Activated CD4-positive, alpha-beta T cell treated with anti-CD3 and anti-CD28 coated beads, Interleukin-2, amount 10 ng/mL, durations not matched to agents 24 days and 14 days (primary cell): ENCODE measurements at regions of chr13 and their contacts with region 1.

Region 1: DNA sequence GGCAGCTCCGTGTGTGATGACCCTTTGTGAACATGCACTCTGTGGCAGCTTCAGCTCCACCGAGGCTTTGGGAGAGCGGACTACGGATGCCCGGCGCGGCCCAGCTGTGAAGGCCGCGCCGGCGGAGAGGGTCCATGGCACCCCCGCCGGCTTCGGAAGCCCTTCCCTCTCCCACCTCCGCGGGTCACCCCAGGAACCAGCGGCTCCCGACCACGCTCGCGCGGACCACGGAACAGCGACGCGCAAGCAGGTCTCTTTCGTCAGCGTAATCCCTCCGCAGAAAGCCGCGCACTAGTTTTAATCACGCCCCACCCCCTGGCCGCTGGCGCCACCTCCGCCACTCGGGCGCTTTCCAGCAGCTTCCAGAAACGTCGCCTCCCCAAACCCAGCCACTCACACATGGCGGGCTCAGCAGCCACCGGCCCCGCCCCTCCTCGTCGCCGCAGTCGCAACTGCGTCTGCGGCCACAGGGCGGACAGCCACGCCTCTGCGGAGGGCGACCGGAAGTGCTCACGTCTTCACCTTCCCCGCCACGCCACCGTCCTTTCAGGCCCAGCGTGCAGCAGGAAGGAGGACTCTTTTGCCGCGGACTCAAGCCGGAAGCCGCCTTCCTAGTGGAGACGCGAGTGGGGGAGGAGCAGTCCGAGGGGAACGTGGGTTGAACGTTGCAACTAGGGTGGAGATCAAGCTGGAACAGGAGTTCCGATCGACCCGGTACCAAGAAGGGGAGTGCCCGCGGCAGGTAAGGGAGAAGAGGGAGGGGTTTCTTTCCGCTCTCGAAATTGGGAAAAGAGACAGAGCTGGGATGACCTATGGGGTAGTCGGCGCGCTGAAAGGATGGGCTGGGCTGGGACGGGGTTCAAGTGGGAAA is at the start of gene USPL1:
- DNase-seq: peak; percentile 100
- H3K4me3 Mint-ChIP-seq: no peak within 1 kb of the TSS
- H3K27ac Mint-ChIP-seq: no peak within 1 kb of the TSS
- H3K4me1 Mint-ChIP-seq: peaks cover 30% of the 10 kb centered on the region
- H3K27me3 Mint-ChIP-seq: no peaks in the 10 kb centered on the region
- total RNA-seq, gene USPL1: 16.2 and 18.7 TPM in 2 replicates

Region 2: DNA sequence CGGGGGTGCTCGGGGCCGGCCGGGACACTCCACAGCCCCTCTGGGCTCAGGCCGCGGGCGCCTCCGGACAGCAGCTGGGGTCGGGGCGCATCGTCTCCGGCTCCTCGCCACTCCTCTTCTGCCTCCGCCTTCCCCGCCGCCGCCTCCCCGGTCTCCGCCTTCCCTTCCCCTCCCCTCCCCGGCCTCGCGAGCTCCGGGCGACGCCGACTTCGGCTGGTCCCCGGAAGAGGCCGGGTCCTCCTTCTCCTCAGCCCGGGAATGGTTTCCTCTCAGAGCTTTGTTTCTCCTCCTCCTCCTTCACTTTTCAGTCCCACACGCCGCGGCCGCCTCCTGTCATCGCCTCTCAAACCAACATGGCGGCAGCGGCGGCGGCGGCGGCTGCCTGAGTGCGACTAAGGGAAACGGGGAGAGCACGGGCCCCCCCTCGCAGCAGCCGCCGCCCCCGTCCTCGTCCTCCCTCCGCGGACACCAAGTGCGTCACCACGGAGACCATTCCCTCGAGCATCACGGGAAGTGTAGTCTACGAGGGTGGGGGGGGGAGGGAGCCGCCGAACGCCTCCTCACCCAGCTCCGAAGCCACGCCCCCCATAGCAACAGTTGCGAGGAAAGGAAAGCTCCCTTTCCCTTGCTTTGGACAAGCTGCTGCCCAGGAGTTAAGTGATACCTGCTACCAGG is 767.2 kb before region 1 on chr13 and contains the start of gene UBL3:
- intact Hi-C with region 1: loop called (anchors 2 kb)
- DNase-seq: peak; percentile 97
- H3K4me3 Mint-ChIP-seq: peak within 1 kb of the TSS; percentile 97
- H3K27ac Mint-ChIP-seq: peak within 1 kb of the TSS; percentile 100
- H3K4me1 Mint-ChIP-seq: peaks cover 43% of the 10 kb centered on the region
- H3K27me3 Mint-ChIP-seq: no peaks in the 10 kb centered on the region
- total RNA-seq, gene UBL3: 9.5 and 10.1 TPM in 2 replicates

Region 3: DNA sequence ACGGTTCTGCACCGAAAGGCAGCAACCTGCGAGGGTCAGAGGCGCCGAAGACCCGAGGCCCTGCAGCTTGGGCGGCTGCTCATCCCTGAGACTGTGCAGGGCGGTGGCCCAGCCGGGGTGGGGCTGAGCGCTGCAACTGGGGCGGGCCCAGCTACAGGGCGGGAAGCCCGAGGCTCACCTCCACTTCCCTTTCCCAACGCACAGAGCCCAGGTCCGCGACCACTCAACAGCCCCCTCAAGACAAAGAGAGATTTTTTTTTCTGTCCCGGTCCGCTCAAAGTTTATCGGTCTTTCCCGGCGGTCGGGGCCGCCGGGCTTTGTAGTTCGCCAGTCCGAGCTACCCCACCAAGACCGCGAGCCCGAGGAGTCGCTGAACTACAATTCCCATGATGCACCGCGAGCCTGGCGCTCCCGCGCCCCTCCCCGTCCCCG is 310.8 kb before region 1 on chr13:
- intact Hi-C with region 1: loop called (anchors 2 kb)
- DNase-seq: peak; percentile 98
- H3K4me3 Mint-ChIP-seq: peak overlapping the region; percentile 89
- H3K27ac Mint-ChIP-seq: peak overlapping the region; percentile 87
- H3K4me1 Mint-ChIP-seq: peaks cover 46% of the 10 kb centered on the region
- H3K27me3 Mint-ChIP-seq: no peaks in the 10 kb centered on the region

Region 4: DNA sequence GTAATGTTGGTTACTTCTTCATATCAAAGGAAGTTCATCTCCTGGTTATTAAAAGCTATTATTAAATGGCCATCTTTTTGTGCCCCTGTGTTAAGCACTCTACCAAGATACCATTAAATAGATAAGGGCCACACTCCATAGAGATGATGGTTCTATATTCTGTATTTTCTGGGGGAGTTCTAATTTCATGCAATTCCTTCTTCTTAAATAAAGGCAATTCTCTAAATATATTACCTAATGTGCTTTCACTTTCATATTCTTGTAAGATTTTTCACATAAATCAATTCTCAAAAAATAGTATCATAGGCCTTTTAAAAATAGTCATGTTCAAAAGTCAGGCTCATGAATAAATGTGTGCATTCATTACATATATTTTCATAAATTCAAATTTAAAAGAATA is 46.9 kb before region 1 on chr13:
- intact Hi-C with region 1: no loop called
- DNase-seq: no peak
- H3K4me3 Mint-ChIP-seq: no peak overlapping the region
- H3K27ac Mint-ChIP-seq: no peak overlapping the region
- H3K4me1 Mint-ChIP-seq: peaks cover 19% of the 10 kb centered on the region
- H3K27me3 Mint-ChIP-seq: no peaks in the 10 kb centered on the region

Region 5: DNA sequence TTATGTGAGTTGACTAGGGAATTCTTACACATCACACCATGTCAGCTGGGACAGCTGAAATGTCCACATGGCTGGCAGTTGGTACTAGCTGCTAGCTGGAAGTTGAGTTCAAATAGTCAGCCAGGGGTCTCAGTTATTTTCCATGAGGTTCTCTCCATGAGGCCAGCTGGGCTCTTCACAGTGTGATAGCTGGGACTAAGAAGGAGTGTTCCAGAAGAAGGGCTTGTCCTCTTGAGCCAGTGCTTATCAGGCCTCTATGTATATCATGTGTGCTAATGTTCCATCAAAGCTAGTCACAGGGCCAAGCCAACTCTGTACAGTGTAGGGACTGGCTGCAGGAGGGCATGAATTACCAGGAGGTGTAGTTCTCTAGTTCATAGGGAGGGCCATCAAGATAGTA is 12.0 kb after region 1 on chr13:
- intact Hi-C with region 1: loop called (anchors 1 kb)
- DNase-seq: no peak
- H3K4me3 Mint-ChIP-seq: no peak overlapping the region
- H3K27ac Mint-ChIP-seq: no peak overlapping the region
- H3K4me1 Mint-ChIP-seq: peaks cover 35% of the 10 kb centered on the region
- H3K27me3 Mint-ChIP-seq: no peaks in the 10 kb centered on the region

Region 6: DNA sequence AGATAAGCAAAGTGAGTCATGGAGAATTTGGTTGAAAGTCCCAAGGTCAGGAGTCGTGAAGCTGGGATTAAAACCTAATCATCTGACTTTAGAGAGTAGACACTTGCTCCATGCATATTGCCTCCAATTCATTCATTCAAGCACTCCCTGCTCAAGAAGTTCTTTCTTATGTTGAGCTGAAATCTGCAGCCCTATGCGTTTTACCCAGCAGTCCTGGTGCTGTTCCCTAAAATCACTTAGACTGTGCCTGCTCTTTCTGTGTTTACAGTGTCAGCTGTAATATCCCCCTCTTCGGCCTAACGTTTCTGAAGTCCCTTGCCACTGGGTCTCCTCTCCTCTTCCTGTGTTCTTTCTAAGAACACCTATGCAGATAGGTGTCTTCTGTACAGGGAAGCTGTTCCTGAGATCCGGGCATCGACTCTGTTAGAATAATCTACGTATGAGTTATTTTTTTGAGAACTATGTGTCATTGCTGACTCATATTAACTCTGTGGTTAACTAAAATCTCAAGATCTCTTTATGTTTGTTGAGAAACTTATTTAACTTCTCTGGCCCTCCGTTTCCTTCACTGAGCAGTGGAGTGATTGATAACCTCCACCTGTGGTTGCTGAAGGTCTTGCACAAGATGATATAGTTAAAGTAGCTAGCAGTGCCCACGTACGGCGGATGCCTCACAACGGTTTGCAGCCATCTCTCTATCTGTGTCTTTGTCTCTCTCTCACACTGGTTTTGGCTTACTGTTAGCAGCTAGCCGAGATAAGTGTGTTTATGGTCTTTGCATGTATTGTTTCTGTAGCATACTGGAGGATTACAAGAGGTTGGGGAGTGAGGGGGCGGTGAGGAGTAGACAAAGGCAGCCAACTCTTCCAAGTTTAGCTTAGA is 122.5 kb after region 1 on chr13:
- intact Hi-C with region 1: loop called (anchors 1 kb)
- DNase-seq: peak; percentile 90
- H3K4me3 Mint-ChIP-seq: peak overlapping the region; percentile 78
- H3K27ac Mint-ChIP-seq: peak overlapping the region; percentile 88
- H3K4me1 Mint-ChIP-seq: peaks cover 73% of the 10 kb centered on the region
- H3K27me3 Mint-ChIP-seq: no peaks in the 10 kb centered on the region

Region 7: DNA sequence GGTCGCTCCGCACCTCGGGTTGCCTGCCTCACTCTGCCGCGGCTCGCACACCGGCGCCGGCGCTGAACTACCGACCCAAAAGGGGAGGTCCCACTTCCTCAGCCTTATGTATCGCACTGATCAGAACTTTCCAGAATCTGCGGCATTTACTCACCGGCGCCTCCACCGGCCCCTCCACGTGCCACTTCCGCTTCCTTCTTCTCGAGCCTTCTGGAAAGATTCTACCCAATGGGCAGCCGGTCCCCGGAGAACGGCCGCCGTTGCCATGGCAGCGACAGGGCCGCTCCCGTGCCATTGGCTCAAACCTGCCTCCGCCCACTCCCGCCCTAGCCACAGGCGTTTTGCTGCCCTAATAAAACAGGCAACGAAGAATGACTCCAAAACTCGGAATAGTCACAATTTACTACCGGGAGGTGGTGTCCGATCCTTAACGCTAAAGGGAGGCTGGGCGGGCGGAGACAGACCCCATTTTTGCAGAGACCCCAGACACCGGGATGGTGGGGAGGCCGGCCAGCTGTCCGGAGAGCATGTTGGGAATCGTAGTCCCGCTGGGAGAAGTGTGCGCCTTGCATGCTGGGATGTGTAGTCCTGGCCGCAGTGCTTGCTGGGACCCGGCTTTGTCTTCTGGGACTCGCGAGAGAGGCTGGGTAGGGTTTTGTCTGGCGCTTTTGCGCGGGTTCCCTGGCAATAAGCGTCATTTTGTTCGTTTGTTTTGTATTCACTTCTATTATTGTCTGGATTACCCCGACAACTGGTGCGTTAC is 544.5 kb after region 1 on chr13 and contains the start of gene HSPH1:
- intact Hi-C with region 1: loop called (anchors 1 kb)
- DNase-seq: peak; percentile 100
- H3K4me3 Mint-ChIP-seq: peak within 1 kb of the TSS; percentile 99
- H3K27ac Mint-ChIP-seq: peak within 1 kb of the TSS; percentile 99
- H3K4me1 Mint-ChIP-seq: peaks cover 45% of the 10 kb centered on the region
- H3K27me3 Mint-ChIP-seq: peaks cover 2% of the 10 kb centered on the region
- total RNA-seq, gene HSPH1: 381 and 385 TPM in 2 replicates